Thyroid gland (tissue), 4 donors: ENCODE measurements at regions of chr3 and their contacts with region 1.

Region 1: DNA sequence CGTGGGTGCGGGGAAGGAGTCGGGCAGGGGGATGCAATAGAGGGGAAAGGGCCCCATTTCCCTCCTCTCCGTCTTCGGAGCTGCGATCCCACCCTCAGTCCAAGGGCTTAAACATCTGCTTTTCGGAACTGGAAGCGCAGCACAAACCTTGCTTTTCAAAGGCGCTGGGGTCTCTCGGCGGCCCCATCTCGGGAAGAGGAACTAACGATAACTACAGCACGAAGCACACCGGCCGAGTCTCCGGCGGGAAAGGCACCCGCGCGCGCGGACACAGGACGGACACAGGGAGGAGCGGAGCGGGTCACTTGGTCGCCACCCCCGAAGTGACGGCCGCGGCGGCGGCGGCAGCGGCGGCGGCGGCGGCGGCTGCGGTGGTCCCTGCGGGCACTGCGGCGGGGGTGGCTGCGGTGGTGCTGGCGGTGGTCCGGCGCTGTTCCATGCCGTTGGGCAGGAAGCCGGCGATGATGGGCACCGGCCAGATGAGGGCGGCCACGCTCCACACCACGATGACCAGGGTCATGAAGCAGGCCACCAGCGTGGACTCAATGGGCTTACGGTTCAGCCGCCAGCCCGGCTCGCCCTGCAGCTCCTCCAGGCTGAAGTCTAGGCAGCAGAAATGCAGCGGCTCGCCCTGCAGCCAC is 1.1 kb downstream of the TMEM158 start:
- DNase-seq: peak; percentile 53 to 60
- H3K4me3 ChIP-seq: peak overlapping the region in 2 of 3 donors; percentile 11 to 21
- H3K27ac ChIP-seq: no peak overlapping the region
- H3K4me1 ChIP-seq: peaks cover 0 to 5% of the 10 kb centered on the region in 2 donors
- H3K27me3 ChIP-seq: peaks cover 8% of the 10 kb centered on the region
- CTCF ChIP-seq: peak in 4 of 6 experiments; percentile 11 to 51 (median 34)
- POLR2A ChIP-seq: no peak

Region 2: DNA sequence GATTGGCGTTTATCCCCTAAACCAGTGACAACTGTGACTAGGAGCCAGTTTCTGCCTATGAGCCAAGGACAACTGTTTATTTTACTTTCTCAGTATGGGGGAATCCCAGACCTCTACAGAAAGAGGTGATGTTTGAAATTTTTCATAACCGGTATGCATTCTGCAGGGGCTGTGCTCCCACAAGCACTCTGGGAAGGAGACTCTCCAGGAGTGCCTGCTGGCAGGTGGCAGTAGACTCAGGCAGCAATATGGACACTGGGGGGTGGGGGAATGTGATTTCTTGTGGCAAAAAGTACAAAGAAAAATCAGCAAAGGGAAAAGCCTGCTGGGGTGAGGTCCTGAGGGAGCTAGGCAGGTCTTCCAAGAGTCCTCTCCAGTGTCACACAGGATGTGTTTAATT is 344.7 kb before region 1 on chr3:
- intact Hi-C with region 1: no loop called
- DNase-seq: peak; percentile 7 to 12
- H3K4me3 ChIP-seq: no peak overlapping the region
- H3K27ac ChIP-seq: no peak overlapping the region
- H3K4me1 ChIP-seq: peaks cover 4 to 22% of the 10 kb centered on the region in 2 donors
- H3K27me3 ChIP-seq: no peaks in the 10 kb centered on the region
- CTCF ChIP-seq: no peak
- POLR2A ChIP-seq: no peak

Region 3: DNA sequence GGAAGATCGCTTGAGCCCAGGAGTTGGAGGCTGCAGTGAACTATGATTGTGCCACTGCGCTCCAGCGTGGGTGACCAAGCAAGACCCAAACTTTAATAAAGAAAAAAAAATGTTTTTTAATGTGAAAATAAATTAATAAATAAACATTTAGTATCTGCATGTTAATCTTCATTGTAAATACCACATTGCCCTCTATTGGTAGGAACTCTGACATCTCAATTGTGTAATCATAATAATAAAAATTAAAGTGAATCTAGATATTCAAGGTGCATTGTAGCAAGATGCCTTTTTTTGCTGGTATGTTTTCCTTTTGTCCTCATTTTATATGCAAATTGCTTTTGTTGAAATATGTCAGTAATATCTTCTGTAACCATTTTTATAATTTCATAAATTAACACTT is 274.6 kb after region 1 on chr3:
- intact Hi-C with region 1: loop called (anchors 10 kb)
- DNase-seq: no peak
- H3K4me3 ChIP-seq: no peak overlapping the region
- H3K27ac ChIP-seq: no peak overlapping the region
- H3K4me1 ChIP-seq: no peaks in the 10 kb centered on the region
- H3K27me3 ChIP-seq: no peaks in the 10 kb centered on the region
- CTCF ChIP-seq: peak in 4 of 6 experiments; percentile 18 to 56 (median 44)
- POLR2A ChIP-seq: no peak